Tibial artery (tissue), 4 donors: ENCODE measurements at regions of chr11 and their contacts with region 1.

Region 1: GRCh38 chr11:32168924-32169323 is 78.0 kb downstream of the RCN1 start:
- DNase-seq: no peak
- H3K4me3 ChIP-seq: no peak overlapping the region
- H3K27ac ChIP-seq: no peak overlapping the region
- H3K4me1 ChIP-seq: peaks cover 0 to 10% (median 4%) of the 10 kb centered on the region in 4 donors
- H3K27me3 ChIP-seq: no peaks in the 10 kb centered on the region
- CTCF ChIP-seq: no peak

Region 2: DNA sequence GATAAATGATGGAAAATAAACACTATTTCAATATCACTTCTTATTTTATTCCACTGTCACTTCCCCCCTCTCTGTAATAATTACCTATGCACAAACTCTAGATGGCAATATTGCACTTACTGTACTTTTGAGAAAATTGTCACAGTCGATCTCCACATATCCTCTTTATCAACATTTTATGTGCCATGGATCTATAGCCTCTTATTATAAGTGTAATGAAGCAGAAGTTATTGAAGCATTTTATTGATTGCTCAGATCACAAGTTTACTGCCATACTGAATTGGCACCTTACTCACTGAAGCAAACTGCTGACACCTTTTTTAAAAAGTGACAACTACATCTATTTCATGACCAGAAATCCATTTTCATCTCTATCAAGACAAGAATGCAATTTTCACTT is 932.8 kb before region 1 on chr11:
- intact Hi-C with region 1: loop called (anchors 5 kb)
- DNase-seq: no peak
- H3K4me3 ChIP-seq: no peak overlapping the region
- H3K27ac ChIP-seq: no peak overlapping the region
- H3K4me1 ChIP-seq: no peaks in the 10 kb centered on the region
- H3K27me3 ChIP-seq: no peaks in the 10 kb centered on the region
- CTCF ChIP-seq: no peak

Region 3: GRCh38 chr11:31903225-31904074 is 265.5 kb before region 1 on chr11:
- intact Hi-C with region 1: no loop called
- DNase-seq: no peak
- H3K4me3 ChIP-seq: no peak overlapping the region
- H3K27ac ChIP-seq: peak overlapping the region in 1 of 2 donors; percentile 38
- H3K4me1 ChIP-seq: peaks cover 0 to 13% (median 5%) of the 10 kb centered on the region in 4 donors
- H3K27me3 ChIP-seq: peaks cover 0 to 2% of the 10 kb centered on the region in 2 donors
- CTCF ChIP-seq: no peak

Region 4: DNA sequence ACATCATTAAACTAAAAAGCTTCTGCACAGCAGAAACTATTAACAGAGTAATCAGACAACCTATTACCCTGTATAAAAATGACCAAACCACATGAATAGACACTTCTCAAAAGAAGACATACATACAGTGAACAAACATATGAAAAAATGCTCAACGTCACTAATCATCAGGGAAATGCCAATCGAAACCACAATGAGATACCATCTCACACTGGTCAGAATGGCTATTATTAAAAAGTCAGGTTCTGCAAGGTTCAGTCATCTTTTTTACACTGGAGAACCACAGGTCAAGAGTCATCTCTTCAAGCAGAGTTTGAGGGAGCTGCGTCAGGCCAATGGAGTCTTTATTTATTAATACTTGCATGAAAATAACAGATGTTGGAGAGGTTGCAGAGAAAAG is 37.6 kb before region 1 on chr11:
- intact Hi-C with region 1: no loop called
- DNase-seq: no peak
- H3K4me3 ChIP-seq: no peak overlapping the region
- H3K27ac ChIP-seq: no peak overlapping the region
- H3K4me1 ChIP-seq: peaks cover 3 to 12% (median 3%) of the 10 kb centered on the region in 4 donors
- H3K27me3 ChIP-seq: no peaks in the 10 kb centered on the region
- CTCF ChIP-seq: no peak

Region 5: GRCh38 chr11:32233276-32233675 is 64.4 kb after region 1 on chr11:
- intact Hi-C with region 1: no loop called
- DNase-seq: no peak
- H3K4me3 ChIP-seq: no peak overlapping the region
- H3K27ac ChIP-seq: no peak overlapping the region
- H3K4me1 ChIP-seq: no peaks in the 10 kb centered on the region
- H3K27me3 ChIP-seq: no peaks in the 10 kb centered on the region
- CTCF ChIP-seq: no peak